A673 (cell line): ENCODE measurements at regions of chr9 and their contacts with region 1.

Region 1: GRCh38 chr9:69759421-69760277 is at the start of gene PTAR1:
- DNase-seq: peak; percentile 94
- H3K4me3 ChIP-seq: peak within 1 kb of the TSS; percentile 63
- H3K27ac ChIP-seq: peak within 1 kb of the TSS; percentile 94
- H3K4me1 ChIP-seq: peaks cover 12% of the 10 kb centered on the region
- H3K27me3 ChIP-seq: no peaks in the 10 kb centered on the region
- CTCF ChIP-seq: no peak
- total RNA-seq, gene PTAR1: 60.9 and 61.5 TPM in 2 replicates

Region 2: GRCh38 chr9:69554945-69555344 is 204.7 kb before region 1 on chr9:
- CTCF ChIA-PET with region 1: no interaction called
- POLR2A ChIA-PET with region 1: no interaction called
- intact Hi-C with region 1: no loop called
- DNase-seq: peak; percentile 39
- H3K4me3 ChIP-seq: no peak overlapping the region
- H3K27ac ChIP-seq: no peak overlapping the region
- H3K4me1 ChIP-seq: no peaks in the 10 kb centered on the region
- H3K27me3 ChIP-seq: peaks cover 26% of the 10 kb centered on the region
- CTCF ChIP-seq: no peak

Region 3: GRCh38 chr9:69815313-69815712 is 55.7 kb after region 1 on chr9:
- CTCF ChIA-PET with region 1: no interaction called
- POLR2A ChIA-PET with region 1: no interaction called
- intact Hi-C with region 1: loop called (anchors 2 kb)
- DNase-seq: peak; percentile 65
- H3K4me3 ChIP-seq: no peak overlapping the region
- H3K27ac ChIP-seq: peak overlapping the region; percentile 77
- H3K4me1 ChIP-seq: peaks cover 63% of the 10 kb centered on the region
- H3K27me3 ChIP-seq: no peaks in the 10 kb centered on the region
- CTCF ChIP-seq: no peak

Region 4: GRCh38 chr9:70563431-70564204 is 804.0 kb after region 1 on chr9:
- CTCF ChIA-PET with region 1: no interaction called
- POLR2A ChIA-PET with region 1: no interaction called
- intact Hi-C with region 1: loop called (anchors 5 kb)
- DNase-seq: no peak
- H3K4me3 ChIP-seq: no peak overlapping the region
- H3K27ac ChIP-seq: no peak overlapping the region
- H3K4me1 ChIP-seq: no peaks in the 10 kb centered on the region
- H3K27me3 ChIP-seq: peaks cover 7% of the 10 kb centered on the region
- CTCF ChIP-seq: no peak